ENCODE measurements at regions of chr18 and their contacts with region 1.

Region 1: GRCh38 chr18:30814446-30814845 is 228.1 kb downstream of the DSC3 start:
- DNase-seq: no peak
- ATAC-seq: no peak
- H3K4me3 ChIP-seq: no peak overlapping the region
- H3K27ac ChIP-seq: no peak overlapping the region
- H3K4me1 ChIP-seq: no peaks in the 10 kb centered on the region
- H3K27me3 ChIP-seq: no peaks in the 10 kb centered on the region
- CTCF ChIP-seq: no peak
- EP300 ChIP-seq: no peak
- POLR2A ChIP-seq: no peak
- RAD21 ChIP-seq: no peak

Region 2: DNA sequence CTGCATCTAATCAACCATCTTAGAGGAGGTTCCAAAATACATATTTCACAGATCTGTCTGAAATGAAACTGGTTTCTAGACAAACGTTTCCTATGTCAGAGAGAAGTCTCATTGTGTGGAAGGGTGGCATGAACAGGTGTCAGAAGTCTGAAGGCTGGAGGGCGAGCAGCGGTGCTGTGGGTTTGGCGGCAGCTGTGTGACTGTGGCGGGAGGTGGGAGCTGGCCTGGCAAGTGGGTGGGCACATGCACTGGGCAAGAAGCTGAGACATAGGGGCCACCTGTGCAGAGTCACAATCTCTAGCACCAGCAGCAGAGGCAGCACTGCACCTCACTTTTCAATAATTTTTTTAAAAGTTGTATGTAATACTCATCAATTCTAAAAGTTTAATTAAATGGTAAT is 118.2 kb before region 1 on chr18:
- CTCF ChIA-PET with region 1: no interaction called
- POLR2A ChIA-PET with region 1: no interaction called
- RAD21 ChIA-PET with region 1: no interaction called
- SMC1A ChIA-PET with region 1: no interaction called
- in situ Hi-C with region 1: no loop called
- intact Hi-C with region 1: no loop called
- DNase-seq: no peak
- ATAC-seq: no peak
- H3K4me3 ChIP-seq: no peak overlapping the region
- H3K27ac ChIP-seq: no peak overlapping the region
- H3K4me1 ChIP-seq: no peaks in the 10 kb centered on the region
- H3K27me3 ChIP-seq: no peaks in the 10 kb centered on the region
- CTCF ChIP-seq: no peak
- EP300 ChIP-seq: no peak
- POLR2A ChIP-seq: no peak
- RAD21 ChIP-seq: no peak

Region 3: GRCh38 chr18:30775629-30776028 is 38.8 kb before region 1 on chr18:
- CTCF ChIA-PET with region 1: no interaction called
- POLR2A ChIA-PET with region 1: no interaction called
- RAD21 ChIA-PET with region 1: no interaction called
- SMC1A ChIA-PET with region 1: no interaction called
- in situ Hi-C with region 1: no loop called
- intact Hi-C with region 1: loop called (anchors 1 kb)
- DNase-seq: no peak
- ATAC-seq: no peak
- H3K4me3 ChIP-seq: no peak overlapping the region
- H3K27ac ChIP-seq: no peak overlapping the region
- H3K4me1 ChIP-seq: no peaks in the 10 kb centered on the region
- H3K27me3 ChIP-seq: no peaks in the 10 kb centered on the region
- CTCF ChIP-seq: no peak
- EP300 ChIP-seq: no peak
- POLR2A ChIP-seq: no peak
- RAD21 ChIP-seq: no peak